Motor neuron (in vitro differentiated cells): ENCODE measurements at regions of chr2 and their contacts with region 1.

Region 1: GRCh38 chr2:43226558-43226954 is at the start of gene ZFP36L2:
- ATAC-seq: peak; percentile 42 to 71 (median 62)
- H3K4me3 ChIP-seq: peak within 1 kb of the TSS; percentile 48 to 77 (median 60)
- H3K27ac ChIP-seq: peak within 1 kb of the TSS; percentile 76 to 94
- H3K4me1 ChIP-seq: peaks cover 7% of the 10 kb centered on the region in 2 donors
- total RNA-seq, gene ZFP36L2: 2.9 to 27.3 (median 8.6) TPM

Region 2: GRCh38 chr2:42828487-42829425 is 397.8 kb before region 1 on chr2:
- in situ Hi-C with region 1: loop called in 7 of 9 experiments (anchors 10 to 25 kb)
- ATAC-seq: peak; percentile 63 to 88 (median 80)
- H3K4me3 ChIP-seq: no peak overlapping the region
- H3K27ac ChIP-seq: no peak overlapping the region
- H3K4me1 ChIP-seq: peaks cover 0 to 3% of the 10 kb centered on the region in 2 donors

Region 3: DNA sequence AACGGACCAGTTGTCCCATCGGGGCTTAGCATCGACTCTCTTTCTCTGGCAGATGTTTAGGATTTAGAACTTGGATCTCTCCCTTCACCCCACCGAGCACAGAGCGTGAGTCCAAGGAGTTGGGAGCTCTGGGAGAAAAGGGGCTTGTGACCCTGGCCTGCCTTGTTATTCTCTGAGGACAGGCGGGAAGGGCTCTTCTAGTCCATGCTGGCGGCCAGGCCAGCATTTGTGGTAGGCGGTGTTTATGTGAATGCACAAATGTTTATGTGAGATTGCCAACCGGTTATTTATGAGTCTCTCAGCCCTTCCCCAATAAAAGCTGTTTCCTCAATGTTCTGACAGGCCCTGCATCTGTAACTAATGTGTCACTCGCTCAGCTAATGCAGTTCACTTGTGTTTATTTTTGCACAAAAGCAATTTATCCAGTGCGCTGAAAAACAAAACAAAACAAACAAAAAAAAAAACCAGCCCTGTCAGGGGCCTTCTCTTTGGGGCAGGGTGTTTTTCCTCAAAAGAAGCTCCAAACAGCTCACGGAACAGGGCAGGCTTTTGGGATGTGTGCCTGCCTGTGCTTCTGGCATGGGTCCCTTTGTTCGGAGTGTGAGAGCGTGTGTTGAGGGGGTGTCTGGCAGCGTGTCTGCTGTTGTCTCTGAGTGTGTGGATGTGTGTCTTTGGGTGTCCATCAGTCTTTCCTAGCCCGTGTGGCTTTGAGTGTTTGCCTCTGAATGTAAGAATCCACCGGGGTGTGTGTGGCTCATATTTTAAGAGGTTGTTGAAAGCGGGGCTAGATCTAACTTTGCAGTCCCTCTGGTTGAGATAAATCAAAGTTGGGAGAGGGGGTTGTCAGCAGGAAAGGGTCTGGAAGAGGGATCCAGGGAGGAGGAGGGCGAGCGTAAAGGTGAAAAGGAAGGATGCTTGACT is 381.4 kb before region 1 on chr2:
- in situ Hi-C with region 1: loop called in 8 of 9 experiments (anchors 10 to 25 kb)
- ATAC-seq: peak; percentile 49 to 91 (median 81)
- H3K4me3 ChIP-seq: no peak overlapping the region
- H3K27ac ChIP-seq: peak overlapping the region; percentile 8 to 41
- H3K4me1 ChIP-seq: peaks cover 19 to 22% of the 10 kb centered on the region in 2 donors

Region 4: GRCh38 chr2:42859006-42859552 is 367.5 kb before region 1 on chr2:
- in situ Hi-C with region 1: loop called in 1 of 9 experiments (anchors 25 kb)
- ATAC-seq: peak in 3 of 8 experiments; percentile 59 to 67 (median 64)
- H3K4me3 ChIP-seq: no peak overlapping the region
- H3K27ac ChIP-seq: no peak overlapping the region
- H3K4me1 ChIP-seq: peaks cover 4 to 5% of the 10 kb centered on the region in 2 donors

Region 5: GRCh38 chr2:42928692-42929545 is 297.6 kb before region 1 on chr2:
- in situ Hi-C with region 1: loop called in 1 of 9 experiments (anchors 25 kb)
- ATAC-seq: peak in 6 of 8 experiments; percentile 7 to 45 (median 30)
- H3K4me3 ChIP-seq: no peak overlapping the region
- H3K27ac ChIP-seq: peak overlapping the region in 1 of 2 donors; percentile 71
- H3K4me1 ChIP-seq: peaks cover 60 to 66% of the 10 kb centered on the region in 2 donors

Region 6: DNA sequence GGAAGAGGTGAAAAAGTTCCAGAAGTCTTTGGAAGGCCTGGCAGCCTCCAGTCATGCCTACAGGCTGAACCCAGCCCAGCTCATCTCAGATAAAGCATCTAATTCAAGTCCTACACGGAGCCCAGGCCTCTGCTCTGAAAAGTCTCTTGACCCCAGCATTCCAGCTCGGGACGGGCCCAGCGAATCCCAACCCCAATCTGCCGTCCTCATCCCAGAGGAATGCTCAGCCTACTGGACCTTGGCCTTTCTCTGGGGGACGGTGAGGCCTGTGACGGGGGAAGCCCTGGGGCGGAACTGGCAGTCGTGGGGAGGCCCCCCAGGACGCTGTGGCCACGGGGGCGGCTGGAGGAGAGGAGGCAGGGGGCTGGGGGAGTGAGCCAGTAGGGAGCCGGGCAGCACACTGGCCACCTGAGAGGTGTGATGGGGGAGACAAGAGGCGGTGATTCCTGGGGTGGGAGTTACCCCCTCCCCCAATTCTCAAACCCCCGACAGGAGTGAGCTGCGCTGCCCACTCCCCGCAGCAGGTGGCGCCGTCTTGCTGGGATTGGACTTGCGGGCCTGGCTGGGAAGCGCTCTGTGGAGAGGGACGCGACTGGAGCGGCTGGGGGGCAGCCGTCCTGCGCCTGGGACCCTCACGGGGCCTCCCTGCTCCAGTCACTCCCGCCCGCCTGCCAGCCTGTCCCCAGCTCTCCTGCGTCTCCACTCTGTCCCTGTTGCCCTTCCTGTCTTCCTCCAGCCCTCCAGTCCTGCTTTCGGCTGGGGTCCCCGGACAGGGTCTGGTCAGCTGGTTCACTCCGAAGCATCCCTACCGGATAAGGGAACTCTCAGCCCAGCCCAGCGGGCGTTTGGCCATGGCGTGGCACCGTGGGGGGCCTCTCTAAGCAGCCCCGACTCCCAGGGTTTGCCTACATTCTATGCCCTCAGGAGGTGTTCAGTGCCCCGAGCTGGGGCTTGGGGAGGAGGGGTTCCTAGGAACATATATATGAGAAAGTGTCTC is 251.5 kb before region 1 on chr2:
- in situ Hi-C with region 1: loop called in 7 of 9 experiments (anchors 10 to 25 kb)
- ATAC-seq: peak; percentile 47 to 93 (median 88)
- H3K4me3 ChIP-seq: peak overlapping the region in 3 of 5 donors; percentile 8 to 13 (median 12)
- H3K27ac ChIP-seq: no peak overlapping the region
- H3K4me1 ChIP-seq: peaks cover 6 to 15% of the 10 kb centered on the region in 2 donors

Region 7: GRCh38 chr2:43484323-43484930 is 257.9 kb after region 1 on chr2:
- in situ Hi-C with region 1: loop called in 6 of 9 experiments (anchors 25 kb)
- ATAC-seq: peak in 4 of 8 experiments; percentile 47 to 58 (median 52)
- H3K4me3 ChIP-seq: no peak overlapping the region
- H3K27ac ChIP-seq: no peak overlapping the region
- H3K4me1 ChIP-seq: peaks cover 0 to 3% of the 10 kb centered on the region in 2 donors